Psoas muscle (tissue), 8 donors: ENCODE measurements at regions of chr7 and their contacts with region 1.

Region 1: GRCh38 chr7:99910976-99911375 is 8.4 kb downstream of the TRIM4 start:
- DNase-seq: no peak
- ATAC-seq: no peak
- H3K4me3 ChIP-seq: no peak overlapping the region
- H3K27ac ChIP-seq: no peak overlapping the region
- H3K4me1 ChIP-seq: peaks cover 4% of the 10 kb centered on the region
- H3K27me3 ChIP-seq: no peaks in the 10 kb centered on the region
- CTCF ChIP-seq: no peak

Region 2: GRCh38 chr7:98168181-98168905 is 1742.6 kb before region 1 on chr7:
- intact Hi-C with region 1: no loop called
- DNase-seq: peak in 1 of 2 donors; percentile 62
- ATAC-seq: peak; percentile 86 to 93 (median 90)
- H3K4me3 ChIP-seq: no peak overlapping the region
- H3K27ac ChIP-seq: peak overlapping the region; percentile 50
- H3K4me1 ChIP-seq: peaks cover 25% of the 10 kb centered on the region
- H3K27me3 ChIP-seq: no peaks in the 10 kb centered on the region
- CTCF ChIP-seq: peak; percentile 90

Region 3: GRCh38 chr7:99624484-99624883 is 286.5 kb before region 1 on chr7:
- intact Hi-C with region 1: loop called in 1 of 2 experiments (anchors 5 kb)
- DNase-seq: peak in 1 of 2 donors; percentile 51
- ATAC-seq: no peak
- H3K4me3 ChIP-seq: no peak overlapping the region
- H3K27ac ChIP-seq: no peak overlapping the region
- H3K4me1 ChIP-seq: no peaks in the 10 kb centered on the region
- H3K27me3 ChIP-seq: no peaks in the 10 kb centered on the region
- CTCF ChIP-seq: no peak

Region 4: DNA sequence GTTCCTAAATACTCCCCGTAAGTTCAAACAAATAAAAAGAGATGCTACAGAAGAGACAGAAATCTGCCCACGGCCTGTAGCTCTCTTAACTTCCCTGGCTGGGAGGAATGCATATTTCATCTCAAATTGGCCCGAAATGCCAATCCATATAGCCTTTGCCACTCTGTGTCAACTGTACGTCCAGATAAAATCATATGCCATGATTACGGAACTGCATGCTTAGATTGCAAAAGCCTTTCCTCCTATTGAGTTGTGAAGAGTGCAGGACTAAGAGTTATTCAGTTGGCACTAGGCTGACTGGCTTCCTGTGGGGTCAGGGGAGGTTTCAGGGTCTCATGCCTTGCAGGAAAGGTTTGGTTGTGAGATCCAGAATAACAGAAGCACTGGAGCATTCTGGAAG is 74.5 kb after region 1 on chr7:
- intact Hi-C with region 1: loop called (anchors 5 kb)
- DNase-seq: no peak
- ATAC-seq: no peak
- H3K4me3 ChIP-seq: no peak overlapping the region
- H3K27ac ChIP-seq: no peak overlapping the region
- H3K4me1 ChIP-seq: no peaks in the 10 kb centered on the region
- H3K27me3 ChIP-seq: no peaks in the 10 kb centered on the region
- CTCF ChIP-seq: no peak